HEK293 (cell line): ENCODE measurements at regions of chr10 and their contacts with region 1.

Region 1: GRCh38 chr10:86755740-86756510 is 494 bp upstream of the BMPR1A start:
- H3K4me3 ChIP-seq: peak overlapping the region; percentile 80
- H3K27ac ChIP-seq: peak overlapping the region; percentile 99
- H3K4me1 ChIP-seq: 0 out of 2 replicates have a peak, but pooled peaks cover 3% of the 10 kb centered on the region
- CTCF ChIP-seq: no peak

Region 2: GRCh38 chr10:86710987-86711512 is 44.9 kb before region 1 on chr10:
- CTCF ChIA-PET with region 1: interaction called, 5 read pairs
- POLR2A ChIA-PET with region 1: interaction called, 12 read pairs
- H3K4me3 ChIP-seq: peak overlapping the region; percentile 60
- H3K27ac ChIP-seq: peak overlapping the region; percentile 99
- H3K4me1 ChIP-seq: peaks cover 8% of the 10 kb centered on the region; the same call in 1 of the 2 replicates
- CTCF ChIP-seq: peak; percentile 97